KBM-7 (cell line): ENCODE measurements at regions of chr5 and their contacts with region 1.

Region 1: GRCh38 chr5:62460578-62460983 is 48.0 kb downstream of the IPO11 start:
- DNase-seq: peak; percentile 64

Region 2: DNA sequence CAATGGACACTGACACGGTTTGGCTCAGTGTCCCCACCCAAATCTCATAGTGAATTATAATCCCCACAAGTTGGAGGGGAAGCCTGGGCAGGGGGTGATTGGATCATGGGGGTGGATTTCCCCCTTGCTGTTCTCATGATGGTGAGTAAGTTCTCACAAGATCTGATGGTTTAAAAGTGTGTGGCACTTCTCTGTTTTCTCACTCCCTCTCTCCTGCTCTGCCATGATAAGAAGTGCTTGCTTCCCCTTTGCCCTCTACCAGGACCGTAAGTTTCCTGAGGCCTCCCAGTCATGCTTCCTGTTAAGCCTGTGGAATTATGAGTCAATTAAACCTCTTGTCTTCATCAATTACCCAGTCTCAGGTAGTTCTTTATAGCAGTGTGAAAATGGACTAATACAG is 270.4 kb before region 1 on chr5:
- in situ Hi-C with region 1: no loop called
- DNase-seq: peak; percentile 65

Region 3: GRCh38 chr5:62732677-62733121 is 272.1 kb after region 1 on chr5:
- in situ Hi-C with region 1: loop called (anchors 25 kb)
- DNase-seq: peak; percentile 78

Region 4: GRCh38 chr5:63097286-63097685 is 636.7 kb after region 1 on chr5:
- in situ Hi-C with region 1: loop called (anchors 25 kb)
- DNase-seq: no peak